ENCODE measurements at regions of chr9 and their contacts with region 1.

Region 1: DNA sequence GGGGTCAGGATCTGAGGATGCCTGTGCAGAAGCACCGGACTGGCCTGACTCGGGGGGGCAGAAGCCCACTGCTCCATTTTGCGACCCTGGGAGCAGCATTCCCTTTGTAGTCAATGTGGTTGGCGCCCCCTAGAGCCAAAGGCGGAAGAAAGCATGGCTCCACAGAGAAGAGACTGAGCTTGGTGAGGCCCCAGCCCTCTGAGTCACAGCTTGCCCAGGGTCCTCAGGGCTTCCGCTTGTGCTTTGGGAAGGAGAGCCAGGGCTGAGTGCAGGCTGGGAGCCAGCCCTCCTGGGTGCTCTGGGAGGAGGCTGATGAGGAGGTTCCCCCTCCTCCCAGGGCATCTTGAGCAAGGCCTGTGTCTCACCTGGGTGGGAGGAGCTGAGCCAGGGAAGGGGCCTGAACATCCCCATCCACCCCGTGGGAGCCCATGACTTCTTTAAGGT is 5.5 kb upstream of the AQP3 start:
- DNase-seq: peak; percentile 57
- H3K4me3 Mint-ChIP-seq: peak overlapping the region; percentile 22
- H3K27ac Mint-ChIP-seq: peak overlapping the region; percentile 94
- H3K4me1 Mint-ChIP-seq: peaks cover 70% of the 10 kb centered on the region
- H3K27me3 Mint-ChIP-seq: no peaks in the 10 kb centered on the region

Region 2: DNA sequence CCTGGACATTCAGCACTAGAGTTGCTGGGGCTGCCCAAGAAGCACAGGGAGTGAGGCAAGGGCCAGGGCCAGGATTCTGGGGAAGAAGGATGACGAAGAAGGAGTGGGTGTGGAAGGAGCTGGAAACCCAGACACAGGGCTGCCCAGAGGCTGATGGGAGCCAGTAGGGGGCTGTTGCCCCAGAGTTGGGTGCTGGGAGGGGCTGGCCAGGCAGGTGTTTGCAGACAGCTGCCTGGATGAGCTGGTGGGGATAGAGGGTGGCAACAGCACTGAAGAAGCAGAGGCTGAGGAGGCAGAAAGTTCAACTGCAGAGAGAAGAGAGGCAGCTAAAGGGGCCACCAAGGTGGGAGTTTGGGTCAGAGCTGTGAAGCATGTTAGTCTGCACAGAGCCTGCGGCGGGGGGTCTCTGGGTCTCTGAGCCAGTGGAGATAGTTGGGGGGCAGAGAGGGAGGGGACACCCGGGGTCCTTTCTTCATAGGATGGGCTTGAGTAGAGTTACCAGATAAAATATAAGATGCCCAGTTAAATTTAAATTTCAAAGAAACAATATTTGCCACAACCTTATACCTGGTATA is 48.0 kb before region 1 on chr9:
- CTCF ChIA-PET with region 1: interaction called, 132 read pairs
- POLR2A ChIA-PET with region 1: no interaction called
- DNase-seq: no peak
- H3K4me3 Mint-ChIP-seq: no peak overlapping the region
- H3K27ac Mint-ChIP-seq: no peak overlapping the region
- H3K4me1 Mint-ChIP-seq: peaks cover 18% of the 10 kb centered on the region
- H3K27me3 Mint-ChIP-seq: peaks cover 2% of the 10 kb centered on the region

Region 3: GRCh38 chr9:33473643-33474352 is 20.9 kb after region 1 on chr9 and contains the start of gene NOL6:
- CTCF ChIA-PET with region 1: interaction called, 103 read pairs
- POLR2A ChIA-PET with region 1: interaction called, 4 read pairs
- DNase-seq: peak; percentile 99
- H3K4me3 Mint-ChIP-seq: peak within 1 kb of the TSS; percentile 94
- H3K27ac Mint-ChIP-seq: peak within 1 kb of the TSS; percentile 92
- H3K4me1 Mint-ChIP-seq: peaks cover 27% of the 10 kb centered on the region
- H3K27me3 Mint-ChIP-seq: no peaks in the 10 kb centered on the region
- total RNA-seq, gene NOL6: 36.2 to 37.7 TPM